ENCODE measurements at regions of chr12 and their contacts with region 1.

Region 1: GRCh38 chr12:3885277-3886094 is 12.3 kb upstream of the PARP11 start:
- DNase-seq: peak; percentile 45
- H3K4me3 Mint-ChIP-seq: peak overlapping the region; percentile 42
- H3K27ac Mint-ChIP-seq: peak overlapping the region; percentile 34
- H3K4me1 Mint-ChIP-seq: peaks cover 7% of the 10 kb centered on the region
- H3K27me3 Mint-ChIP-seq: peaks cover 6% of the 10 kb centered on the region

Region 2: DNA sequence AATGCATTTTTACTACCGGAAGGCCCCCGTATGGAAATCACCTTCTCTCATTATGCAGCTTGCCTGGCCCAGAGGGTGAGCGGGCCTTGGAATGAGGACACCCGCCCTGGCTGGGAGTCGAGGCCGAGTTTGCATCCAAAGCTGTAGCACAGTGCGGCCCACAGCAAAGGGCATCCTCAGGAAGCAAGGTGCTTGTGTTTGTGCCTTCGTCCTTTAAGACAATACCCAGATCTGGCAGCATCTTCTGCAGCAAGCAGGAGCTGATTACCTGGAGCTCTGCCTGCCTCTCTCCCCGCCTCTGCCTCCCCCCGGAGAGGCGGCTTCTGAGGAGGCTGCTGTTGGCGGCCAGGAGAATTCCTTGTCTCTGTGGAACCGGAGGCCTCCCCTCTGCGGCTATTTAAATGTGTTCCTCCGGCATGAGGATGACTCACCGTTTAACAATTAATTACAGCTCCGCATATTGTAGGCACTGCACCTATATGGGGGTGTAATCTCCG is 1687.4 kb before region 1 on chr12:
- CTCF ChIA-PET with region 1: no interaction called
- POLR2A ChIA-PET with region 1: no interaction called
- intact Hi-C with region 1: no loop called
- DNase-seq: no peak
- H3K4me3 Mint-ChIP-seq: no peak overlapping the region
- H3K27ac Mint-ChIP-seq: no peak overlapping the region
- H3K4me1 Mint-ChIP-seq: no peaks in the 10 kb centered on the region
- H3K27me3 Mint-ChIP-seq: peaks cover 7% of the 10 kb centered on the region

Region 3: DNA sequence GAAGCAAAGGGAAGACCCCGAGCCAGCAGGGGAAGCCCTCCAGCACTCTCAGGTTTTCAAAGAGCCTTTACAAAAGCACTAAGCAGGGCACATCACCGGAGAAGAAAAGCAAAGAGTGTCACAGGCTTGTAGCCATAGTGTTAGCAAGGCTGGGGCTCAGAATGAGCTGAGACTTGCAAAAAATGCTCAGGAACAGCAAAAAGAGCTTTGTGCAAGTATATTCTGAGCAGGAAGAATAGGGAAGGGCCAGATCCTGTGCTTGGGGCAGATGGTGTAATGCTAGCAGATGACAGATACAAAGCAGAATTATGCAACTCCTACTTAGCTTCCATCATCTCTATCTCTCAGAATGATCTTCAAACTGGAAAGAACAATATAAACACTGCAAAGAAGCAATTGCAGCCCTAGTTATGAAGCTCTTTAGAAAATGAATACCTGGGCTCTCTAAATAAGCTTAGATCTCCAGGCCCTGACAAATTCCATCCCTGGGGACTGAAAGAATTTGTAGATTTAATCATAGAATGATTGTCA is 11.4 kb after region 1 on chr12:
- CTCF ChIA-PET with region 1: interaction called, 36 read pairs
- POLR2A ChIA-PET with region 1: no interaction called
- intact Hi-C with region 1: no loop called
- DNase-seq: no peak
- H3K4me3 Mint-ChIP-seq: peak overlapping the region; percentile 16
- H3K27ac Mint-ChIP-seq: peak overlapping the region; percentile 89
- H3K4me1 Mint-ChIP-seq: peaks cover 41% of the 10 kb centered on the region
- H3K27me3 Mint-ChIP-seq: no peaks in the 10 kb centered on the region

Region 4: GRCh38 chr12:3973978-3974644 is 88.6 kb after region 1 on chr12:
- CTCF ChIA-PET with region 1: interaction called, 12 read pairs
- POLR2A ChIA-PET with region 1: no interaction called
- intact Hi-C with region 1: no loop called
- DNase-seq: peak; percentile 35
- H3K4me3 Mint-ChIP-seq: peak overlapping the region; percentile 31
- H3K27ac Mint-ChIP-seq: peak overlapping the region; percentile 74
- H3K4me1 Mint-ChIP-seq: peaks cover 53% of the 10 kb centered on the region
- H3K27me3 Mint-ChIP-seq: no peaks in the 10 kb centered on the region

Region 5: DNA sequence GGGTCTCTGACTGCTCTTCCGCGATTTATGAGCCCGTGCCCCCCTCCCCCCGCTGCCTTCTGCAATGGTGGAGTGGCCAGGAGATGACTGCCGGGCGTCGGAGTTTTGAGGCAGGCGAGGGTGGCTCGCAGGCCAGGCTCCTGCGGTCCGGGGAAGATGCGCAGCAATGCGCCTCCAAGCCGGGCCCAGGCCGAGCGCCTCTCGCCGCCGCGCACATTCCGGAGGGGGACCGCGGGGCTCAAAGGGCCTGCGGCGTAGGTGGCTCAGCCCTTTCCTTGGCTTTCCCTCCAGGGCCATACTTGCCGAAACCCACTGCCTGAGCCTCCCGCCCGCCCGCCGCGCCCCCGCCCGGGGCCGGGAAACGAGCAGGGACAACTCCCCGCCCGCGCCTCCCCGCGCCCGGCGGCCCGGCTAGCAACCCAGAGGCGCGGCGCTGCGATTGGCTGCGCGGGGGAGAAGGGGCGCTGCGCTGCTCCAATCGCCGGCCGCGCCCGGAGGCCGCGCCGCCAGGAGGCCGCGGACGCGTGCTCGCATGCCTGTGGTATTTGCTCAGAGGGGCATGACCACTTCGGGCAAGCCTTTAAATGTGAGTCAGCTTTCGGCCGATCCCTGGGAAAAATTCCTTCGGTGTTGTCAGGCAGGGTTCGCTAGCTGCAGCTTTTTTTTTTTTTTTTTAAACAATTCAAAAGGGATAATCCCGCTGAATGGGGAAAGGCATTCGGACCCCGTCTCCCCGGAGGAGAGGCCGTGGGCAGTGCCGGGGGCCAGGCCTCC is 145.6 kb after region 1 on chr12:
- CTCF ChIA-PET with region 1: interaction called, 43 read pairs
- POLR2A ChIA-PET with region 1: interaction called, 3 read pairs
- intact Hi-C with region 1: loop called (anchors 5 kb)
- DNase-seq: peak; percentile 82
- H3K4me3 Mint-ChIP-seq: peak overlapping the region; percentile 57
- H3K27ac Mint-ChIP-seq: no peak overlapping the region
- H3K4me1 Mint-ChIP-seq: peaks cover 34% of the 10 kb centered on the region
- H3K27me3 Mint-ChIP-seq: no peaks in the 10 kb centered on the region

Region 6: DNA sequence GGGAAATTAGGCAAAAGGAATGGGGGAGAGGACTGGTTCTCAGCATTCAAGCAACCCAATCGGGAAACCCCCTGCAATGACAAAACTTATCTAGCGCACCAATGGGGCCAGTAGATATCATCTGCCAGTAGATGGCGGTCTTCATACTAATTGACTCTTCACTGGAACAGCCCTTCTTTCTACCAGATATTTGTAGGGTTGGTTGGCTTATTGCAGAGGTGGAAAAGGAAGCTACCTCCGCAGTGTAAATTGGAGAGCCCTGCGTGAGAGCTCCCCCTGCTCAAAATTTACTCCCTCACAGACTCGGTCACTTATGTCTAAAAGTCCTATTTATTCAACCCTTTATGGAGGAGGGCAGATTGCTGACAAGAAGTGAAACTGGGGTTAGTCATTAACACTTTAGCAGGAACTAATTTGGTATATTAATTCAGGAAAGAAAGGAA is 222.0 kb after region 1 on chr12:
- CTCF ChIA-PET with region 1: interaction called, 23 read pairs
- POLR2A ChIA-PET with region 1: no interaction called
- intact Hi-C with region 1: no loop called
- DNase-seq: peak; percentile 80
- H3K4me3 Mint-ChIP-seq: peak overlapping the region; percentile 17
- H3K27ac Mint-ChIP-seq: peak overlapping the region; percentile 75
- H3K4me1 Mint-ChIP-seq: peaks cover 40% of the 10 kb centered on the region
- H3K27me3 Mint-ChIP-seq: peaks cover 8% of the 10 kb centered on the region

Measured in activated CD4-positive, alpha-beta memory T cell treated with anti-CD3 and anti-CD28 coated beads for 36 hours (primary cell).